GM10248 (cell line): ENCODE measurements at regions of chr7 and their contacts with region 1.

Region 1: DNA sequence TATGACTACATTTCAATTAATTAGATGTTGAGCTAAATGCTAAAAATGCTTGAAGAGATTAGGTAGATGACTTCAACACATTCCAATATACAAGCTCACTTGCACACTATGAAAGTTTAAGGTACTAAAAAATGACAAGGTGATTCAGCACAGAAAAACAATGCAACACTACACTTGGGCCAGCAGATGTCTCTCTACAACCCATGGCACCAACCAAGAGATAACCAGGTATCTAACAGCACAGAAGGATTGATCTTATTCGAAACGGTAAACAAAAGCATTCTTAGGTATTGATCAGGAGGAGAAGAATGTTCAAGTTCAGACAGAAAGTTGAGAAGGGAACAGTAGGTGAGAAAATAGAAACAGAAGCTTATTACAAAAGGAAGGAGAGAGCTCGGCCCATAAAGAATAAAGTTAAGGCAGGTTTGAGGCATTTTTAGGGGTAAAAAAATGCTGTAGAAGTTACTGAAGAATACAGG is 248.2 kb upstream of the KLF14 start:
- DNase-seq: peak; percentile 50
- CTCF ChIP-seq: peak; percentile 59

Region 2: GRCh38 chr7:130961128-130961601 is 21.0 kb before region 1 on chr7:
- CTCF ChIA-PET with region 1: interaction called, 36 read pairs
- POLR2A ChIA-PET with region 1: interaction called, 3 read pairs
- DNase-seq: peak; percentile 73
- CTCF ChIP-seq: no peak

Region 3: DNA sequence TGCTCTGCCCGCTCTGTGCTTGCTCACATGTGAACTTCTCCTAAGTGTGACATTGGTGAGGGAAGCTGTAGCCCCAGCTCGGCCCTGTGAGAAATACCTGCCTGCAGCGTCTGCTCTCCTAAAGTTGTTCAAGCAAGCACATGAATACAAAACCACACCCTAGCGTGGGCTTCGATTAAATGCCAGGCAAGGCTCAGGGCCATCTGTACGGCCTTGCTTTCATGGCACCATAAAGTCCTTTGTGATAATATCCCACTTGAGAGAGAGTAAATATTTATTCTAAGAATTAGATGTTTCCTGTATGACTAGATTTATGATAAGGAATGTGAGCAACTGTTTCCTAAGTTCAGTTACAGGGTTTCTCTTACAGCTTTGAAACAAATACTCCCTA is 14.6 kb after region 1 on chr7:
- CTCF ChIA-PET with region 1: interaction called, 47 read pairs
- POLR2A ChIA-PET with region 1: no interaction called
- DNase-seq: no peak
- CTCF ChIP-seq: no peak

Region 4: DNA sequence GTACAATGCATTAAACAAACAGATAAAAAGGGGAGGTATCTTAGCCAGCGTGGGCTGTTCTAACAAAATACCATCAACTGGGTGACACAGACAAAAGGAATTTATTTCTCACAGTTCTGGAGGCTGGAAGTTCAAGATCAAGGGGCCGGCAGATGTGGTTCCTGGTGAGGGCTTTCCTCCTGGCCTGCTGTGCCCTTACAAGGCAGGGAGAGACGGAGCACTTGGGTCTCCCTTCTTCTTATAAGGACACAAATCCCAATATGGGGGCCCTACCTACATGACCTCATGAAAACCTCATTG is 33.4 kb after region 1 on chr7:
- CTCF ChIA-PET with region 1: interaction called, 11 read pairs
- POLR2A ChIA-PET with region 1: no interaction called
- DNase-seq: no peak
- CTCF ChIP-seq: no peak

Region 5: GRCh38 chr7:131057015-131057793 is 75.0 kb after region 1 on chr7:
- CTCF ChIA-PET with region 1: interaction called, 12 read pairs
- POLR2A ChIA-PET with region 1: no interaction called
- DNase-seq: peak; percentile 31
- CTCF ChIP-seq: no peak